Ovary (tissue), 10 donors: ENCODE measurements at regions of chr10 and their contacts with region 1.

Region 1: DNA sequence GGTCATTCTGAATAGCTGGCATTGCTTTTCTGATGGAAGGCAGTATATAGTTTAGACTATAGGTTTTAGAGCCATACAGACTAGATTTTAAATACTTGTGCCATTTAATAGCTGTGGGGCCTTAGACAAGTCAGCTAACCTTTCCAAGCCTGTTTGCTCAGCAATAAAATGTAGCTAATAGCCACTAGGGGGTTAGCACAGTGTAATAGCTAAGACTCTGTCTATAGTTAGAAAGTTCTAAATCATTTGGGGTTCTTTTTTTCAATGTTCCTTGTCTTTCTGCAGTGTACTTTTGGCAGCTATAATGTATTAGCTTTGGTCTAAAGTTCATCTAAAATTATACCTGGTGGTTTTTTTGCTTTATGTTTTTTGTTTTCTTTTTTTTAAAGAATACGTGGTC is 7.5 kb upstream of the KIFBP start:
- DNase-seq: no peak
- H3K4me3 ChIP-seq: no peak overlapping the region
- H3K27ac ChIP-seq: no peak overlapping the region
- H3K4me1 ChIP-seq: no peaks in the 10 kb centered on the region
- H3K27me3 ChIP-seq: no peaks in the 10 kb centered on the region
- CTCF ChIP-seq: no peak
- EP300 ChIP-seq: no peak
- POLR2A ChIP-seq: no peak

Region 2: DNA sequence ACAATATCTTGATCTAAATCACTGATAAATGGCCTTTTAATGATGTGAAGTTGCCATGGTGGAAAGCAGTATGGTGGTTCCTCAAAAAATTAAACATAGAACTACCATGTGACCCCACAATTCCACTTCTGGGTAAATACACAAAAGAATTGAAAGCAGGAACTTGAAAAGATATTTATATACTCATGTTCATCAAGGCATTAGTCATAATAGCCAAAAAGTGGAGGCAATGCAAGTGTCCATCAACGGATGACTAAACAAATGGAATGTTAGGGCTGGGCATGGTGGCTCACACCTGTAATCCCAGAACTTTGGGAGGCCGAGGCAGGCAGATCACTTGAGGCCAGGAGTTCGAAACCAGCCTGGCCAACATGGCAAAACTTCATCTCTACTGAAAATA is 1141.1 kb before region 1 on chr10:
- intact Hi-C with region 1: no loop called
- DNase-seq: no peak
- H3K4me3 ChIP-seq: no peak overlapping the region
- H3K27ac ChIP-seq: no peak overlapping the region
- H3K4me1 ChIP-seq: no peaks in the 10 kb centered on the region
- H3K27me3 ChIP-seq: no peaks in the 10 kb centered on the region
- CTCF ChIP-seq: no peak
- EP300 ChIP-seq: no peak
- POLR2A ChIP-seq: no peak

Region 3: GRCh38 chr10:69018613-69019012 is 37.5 kb after region 1 on chr10:
- intact Hi-C with region 1: loop called in 1 of 4 experiments (anchors 1 kb)
- DNase-seq: no peak
- H3K4me3 ChIP-seq: no peak overlapping the region
- H3K27ac ChIP-seq: no peak overlapping the region
- H3K4me1 ChIP-seq: no peaks in the 10 kb centered on the region
- H3K27me3 ChIP-seq: no peaks in the 10 kb centered on the region
- CTCF ChIP-seq: no peak
- EP300 ChIP-seq: no peak
- POLR2A ChIP-seq: no peak

Region 4: GRCh38 chr10:69051303-69051702 is 70.2 kb after region 1 on chr10:
- intact Hi-C with region 1: no loop called
- DNase-seq: no peak
- H3K4me3 ChIP-seq: no peak overlapping the region
- H3K27ac ChIP-seq: no peak overlapping the region
- H3K4me1 ChIP-seq: no peaks in the 10 kb centered on the region
- H3K27me3 ChIP-seq: no peaks in the 10 kb centered on the region
- CTCF ChIP-seq: no peak
- EP300 ChIP-seq: no peak
- POLR2A ChIP-seq: no peak

Region 5: DNA sequence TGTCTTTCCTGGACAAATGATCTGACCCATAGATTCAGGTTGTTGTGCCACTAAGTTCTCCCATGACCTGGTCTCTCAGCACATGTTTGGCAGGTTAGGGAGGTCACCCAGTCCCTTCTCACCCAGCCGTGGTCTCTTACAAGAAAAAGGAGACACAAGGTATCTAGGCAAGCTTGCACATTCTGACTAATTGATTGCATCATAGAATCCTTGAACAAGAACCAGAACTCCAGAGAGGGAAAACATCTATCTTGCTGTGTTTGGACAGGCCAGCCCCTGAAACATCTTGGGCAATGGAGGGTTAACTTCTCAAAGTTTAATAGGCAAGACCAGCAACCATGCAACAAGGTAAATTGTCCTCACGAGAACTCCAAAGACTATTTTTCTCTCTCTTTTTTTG is 288.7 kb after region 1 on chr10:
- intact Hi-C with region 1: no loop called
- DNase-seq: no peak
- H3K4me3 ChIP-seq: no peak overlapping the region
- H3K27ac ChIP-seq: no peak overlapping the region
- H3K4me1 ChIP-seq: no peaks in the 10 kb centered on the region
- H3K27me3 ChIP-seq: no peaks in the 10 kb centered on the region
- CTCF ChIP-seq: no peak
- EP300 ChIP-seq: no peak
- POLR2A ChIP-seq: no peak